B cell (primary cell): ENCODE measurements at regions of chr15 and their contacts with region 1.

Region 1: DNA sequence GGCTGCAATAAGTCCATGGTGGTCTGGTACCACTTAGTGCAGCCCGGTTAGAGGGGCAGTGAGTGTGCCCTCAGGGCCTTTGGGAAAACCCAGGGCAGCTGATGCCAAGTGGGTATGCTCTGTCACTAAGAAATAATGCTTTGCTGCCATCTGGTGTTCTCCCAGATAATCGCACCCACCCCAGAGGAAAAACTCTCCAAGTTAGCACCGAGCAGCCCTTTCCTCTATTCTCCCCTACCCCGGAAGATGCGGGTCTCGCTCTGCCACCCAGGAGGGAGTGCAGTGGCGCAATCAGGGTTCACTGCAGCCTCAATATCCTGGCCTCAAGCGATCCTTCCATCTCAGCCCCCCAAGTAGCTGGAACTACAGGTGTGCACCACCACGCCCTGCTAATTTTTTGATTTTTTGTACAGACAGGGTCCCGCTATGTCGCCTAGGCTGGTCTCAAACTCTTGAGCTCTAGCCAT is 21.3 kb upstream of the DAPK2 start:
- DNase-seq: peak; percentile 84
- ATAC-seq: peak; percentile 91
- H3K4me3 ChIP-seq: no peak overlapping the region
- H3K4me3 Mint-ChIP-seq: no peak overlapping the region
- H3K27ac ChIP-seq: no peak overlapping the region
- H3K27ac Mint-ChIP-seq: peak overlapping the region; percentile 39
- H3K4me1 ChIP-seq: peaks cover 24 to 27% of the 10 kb centered on the region in 2 donors
- H3K4me1 Mint-ChIP-seq: peaks cover 26% of the 10 kb centered on the region
- H3K27me3 ChIP-seq: no peaks in the 10 kb centered on the region
- H3K27me3 Mint-ChIP-seq: no peaks in the 10 kb centered on the region
- CTCF ChIP-seq: peak; percentile 89

Region 2: DNA sequence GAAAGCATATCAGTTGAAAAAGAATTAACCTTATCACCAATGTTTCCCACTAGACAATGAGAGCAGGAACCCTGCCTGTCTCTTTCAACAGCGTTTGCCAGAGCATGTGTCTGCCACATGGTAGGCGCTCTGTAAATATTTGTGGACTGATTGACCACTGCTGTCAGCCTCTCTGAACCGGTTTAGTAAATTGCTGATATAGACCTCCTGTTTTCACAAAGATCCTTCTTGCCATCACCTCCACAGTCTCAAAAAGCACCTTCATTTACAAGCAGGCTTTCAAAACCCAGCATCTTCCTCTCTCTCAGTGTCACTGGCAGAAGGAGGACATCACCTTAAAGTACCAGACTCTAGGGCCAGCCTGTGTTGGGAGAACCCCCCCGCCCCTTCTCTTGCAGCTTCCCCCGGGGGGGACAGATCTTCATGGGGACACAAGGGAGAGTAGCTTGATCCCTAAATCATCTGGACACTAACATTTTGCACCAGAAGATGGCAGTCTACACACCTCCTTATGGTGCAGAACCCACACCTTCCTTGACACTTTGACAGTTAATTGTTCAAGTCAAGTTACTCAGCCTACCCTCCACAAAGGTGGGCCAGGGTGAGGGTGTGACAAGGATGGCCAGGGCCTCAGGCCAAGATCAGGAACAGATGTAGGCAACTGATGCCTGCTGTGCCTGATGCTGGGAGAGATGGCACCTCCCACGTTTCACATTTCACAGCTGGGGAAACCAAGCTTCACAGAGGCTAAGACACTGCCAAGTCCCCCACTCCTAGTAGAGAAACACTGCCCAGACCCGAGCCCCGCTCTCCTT is 601.0 kb before region 1 on chr15:
- CTCF ChIA-PET with region 1: interaction called, 7 read pairs
- POLR2A ChIA-PET with region 1: no interaction called
- intact Hi-C with region 1: loop called (anchors 1 kb)
- DNase-seq: peak; percentile 87
- ATAC-seq: peak; percentile 95
- H3K4me3 ChIP-seq: no peak overlapping the region
- H3K4me3 Mint-ChIP-seq: no peak overlapping the region
- H3K27ac ChIP-seq: no peak overlapping the region
- H3K27ac Mint-ChIP-seq: peak overlapping the region; percentile 47
- H3K4me1 ChIP-seq: peaks cover 4 to 8% of the 10 kb centered on the region in 2 donors
- H3K4me1 Mint-ChIP-seq: peaks cover 31% of the 10 kb centered on the region
- H3K27me3 ChIP-seq: no peaks in the 10 kb centered on the region
- H3K27me3 Mint-ChIP-seq: no peaks in the 10 kb centered on the region
- CTCF ChIP-seq: peak; percentile 81

Region 3: GRCh38 chr15:63826528-63826927 is 241.1 kb before region 1 on chr15:
- CTCF ChIA-PET with region 1: interaction called, 40 read pairs
- POLR2A ChIA-PET with region 1: interaction called, 3 read pairs
- intact Hi-C with region 1: loop called (anchors 1 kb)
- DNase-seq: peak; percentile 62
- ATAC-seq: peak; percentile 31
- H3K4me3 ChIP-seq: no peak overlapping the region
- H3K4me3 Mint-ChIP-seq: no peak overlapping the region
- H3K27ac ChIP-seq: no peak overlapping the region
- H3K27ac Mint-ChIP-seq: peak overlapping the region; percentile 73
- H3K4me1 ChIP-seq: peaks cover 4 to 13% of the 10 kb centered on the region in 2 donors
- H3K4me1 Mint-ChIP-seq: peaks cover 58% of the 10 kb centered on the region
- H3K27me3 ChIP-seq: no peaks in the 10 kb centered on the region
- H3K27me3 Mint-ChIP-seq: no peaks in the 10 kb centered on the region
- CTCF ChIP-seq: peak; percentile 56

Region 4: DNA sequence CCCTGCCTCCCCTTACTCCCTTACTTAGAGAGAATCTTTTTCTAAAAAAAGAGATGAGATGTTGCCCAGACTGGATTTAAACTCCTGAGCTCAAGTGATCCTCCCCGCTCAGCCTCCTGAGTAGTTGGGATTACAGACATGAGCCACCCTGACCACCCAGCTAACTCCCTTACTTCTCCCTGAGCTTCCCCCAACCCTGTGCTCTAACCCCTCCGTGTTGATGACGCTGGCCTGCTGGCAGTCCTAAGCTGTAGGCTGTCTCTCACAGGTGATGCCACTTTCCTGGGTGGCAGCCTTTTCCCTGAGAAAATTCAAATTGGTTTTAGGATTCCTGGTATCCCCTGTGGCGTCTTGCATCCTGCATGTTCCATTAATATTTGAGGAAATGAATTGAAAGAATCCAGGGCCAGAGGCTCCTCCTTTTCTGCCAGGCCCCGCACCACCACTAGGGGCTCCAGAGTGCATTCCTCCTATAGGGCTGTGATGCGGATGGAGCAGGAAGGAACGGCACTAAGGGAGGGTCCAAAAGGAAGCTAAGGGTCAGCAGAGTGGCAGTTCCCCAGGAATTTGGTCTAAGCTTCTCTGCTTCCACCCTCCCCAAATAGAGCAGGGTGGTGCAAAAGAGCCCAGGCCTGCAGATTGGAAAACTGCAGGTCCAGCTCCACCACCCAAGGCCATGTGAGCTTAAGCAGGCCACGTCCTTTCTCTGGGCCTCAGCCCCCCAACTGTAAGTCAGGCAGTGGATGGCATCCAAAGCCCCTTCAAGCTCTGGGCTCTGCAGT is 122.4 kb before region 1 on chr15:
- CTCF ChIA-PET with region 1: interaction called, 27 read pairs
- POLR2A ChIA-PET with region 1: no interaction called
- intact Hi-C with region 1: loop called (anchors 1 kb)
- DNase-seq: peak; percentile 69
- ATAC-seq: peak; percentile 78
- H3K4me3 ChIP-seq: no peak overlapping the region
- H3K4me3 Mint-ChIP-seq: no peak overlapping the region
- H3K27ac ChIP-seq: no peak overlapping the region
- H3K27ac Mint-ChIP-seq: peak overlapping the region; percentile 23
- H3K4me1 ChIP-seq: peaks cover 13 to 26% of the 10 kb centered on the region in 2 donors
- H3K4me1 Mint-ChIP-seq: peaks cover 25% of the 10 kb centered on the region
- H3K27me3 ChIP-seq: peaks cover 0 to 2% (median 0%) of the 10 kb centered on the region in 4 experiments
- H3K27me3 Mint-ChIP-seq: no peaks in the 10 kb centered on the region
- CTCF ChIP-seq: peak; percentile 98

Region 5: DNA sequence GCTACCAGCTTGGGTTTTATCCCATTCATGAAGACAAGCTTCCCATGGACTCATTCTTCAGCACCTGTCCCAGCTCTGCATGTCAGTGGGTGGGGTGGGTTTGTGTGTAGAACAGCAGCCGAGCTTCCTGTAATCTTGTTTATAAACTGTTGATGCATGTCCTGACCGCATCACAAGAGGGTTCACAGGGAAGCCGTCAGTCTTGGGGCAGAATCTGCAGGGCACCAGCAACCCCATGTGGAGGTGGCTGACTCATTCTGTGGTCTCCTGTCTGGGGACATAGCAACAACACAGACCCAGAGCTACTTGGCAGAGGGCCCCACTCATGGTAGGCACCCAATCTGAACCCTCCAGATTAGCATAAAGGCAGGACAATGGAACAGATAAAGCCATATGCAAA is 56.9 kb before region 1 on chr15:
- CTCF ChIA-PET with region 1: interaction called, 55 read pairs
- POLR2A ChIA-PET with region 1: no interaction called
- intact Hi-C with region 1: no loop called
- DNase-seq: peak; percentile 93
- ATAC-seq: peak; percentile 97
- H3K4me3 ChIP-seq: peak overlapping the region in 2 of 5 experiments; percentile 8 to 47
- H3K4me3 Mint-ChIP-seq: peak overlapping the region; percentile 87
- H3K27ac ChIP-seq: peak overlapping the region; percentile 63 to 77
- H3K27ac Mint-ChIP-seq: peak overlapping the region; percentile 97
- H3K4me1 ChIP-seq: peaks cover 27 to 36% of the 10 kb centered on the region in 2 donors
- H3K4me1 Mint-ChIP-seq: peaks cover 43% of the 10 kb centered on the region
- H3K27me3 ChIP-seq: no peaks in the 10 kb centered on the region
- H3K27me3 Mint-ChIP-seq: no peaks in the 10 kb centered on the region
- CTCF ChIP-seq: peak; percentile 51

Region 6: DNA sequence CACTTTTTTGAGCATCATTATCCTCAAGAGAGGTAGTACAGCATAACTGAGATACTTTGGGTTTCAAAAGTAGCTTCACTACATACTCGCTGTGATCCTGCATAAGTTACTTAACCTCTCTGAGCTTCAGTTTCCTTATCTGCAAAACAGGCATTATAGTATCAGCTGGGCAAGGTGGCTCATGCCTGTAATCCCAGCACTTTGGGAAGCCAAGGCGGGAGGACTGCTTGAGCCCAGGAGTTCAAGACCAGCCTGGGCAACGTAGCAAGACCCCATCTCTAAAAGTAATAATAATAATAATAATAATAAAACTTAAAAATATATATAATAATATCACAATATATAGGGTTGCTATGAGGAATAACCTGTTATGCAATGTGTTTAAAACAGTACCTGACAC is 15.2 kb after region 1 on chr15:
- CTCF ChIA-PET with region 1: interaction called, 32 read pairs
- POLR2A ChIA-PET with region 1: no interaction called
- intact Hi-C with region 1: no loop called
- DNase-seq: no peak
- ATAC-seq: no peak
- H3K4me3 ChIP-seq: no peak overlapping the region
- H3K4me3 Mint-ChIP-seq: no peak overlapping the region
- H3K27ac ChIP-seq: no peak overlapping the region
- H3K27ac Mint-ChIP-seq: no peak overlapping the region
- H3K4me1 ChIP-seq: peaks cover 0 to under 1% of the 10 kb centered on the region in 2 donors
- H3K4me1 Mint-ChIP-seq: peaks cover 6% of the 10 kb centered on the region
- H3K27me3 ChIP-seq: no peaks in the 10 kb centered on the region
- H3K27me3 Mint-ChIP-seq: no peaks in the 10 kb centered on the region
- CTCF ChIP-seq: no peak

Region 7: GRCh38 chr15:64205208-64205607 is 137.6 kb after region 1 on chr15:
- CTCF ChIA-PET with region 1: no interaction called
- POLR2A ChIA-PET with region 1: no interaction called
- intact Hi-C with region 1: no loop called
- DNase-seq: no peak
- ATAC-seq: no peak
- H3K4me3 ChIP-seq: no peak overlapping the region
- H3K4me3 Mint-ChIP-seq: no peak overlapping the region
- H3K27ac ChIP-seq: no peak overlapping the region
- H3K27ac Mint-ChIP-seq: no peak overlapping the region
- H3K4me1 ChIP-seq: no peaks in the 10 kb centered on the region
- H3K4me1 Mint-ChIP-seq: peaks cover 1% of the 10 kb centered on the region
- H3K27me3 ChIP-seq: no peaks in the 10 kb centered on the region
- H3K27me3 Mint-ChIP-seq: no peaks in the 10 kb centered on the region
- CTCF ChIP-seq: no peak